Activated CD4-positive, alpha-beta memory T cell treated with anti-CD3 and anti-CD28 coated beads for 36 hours (primary cell): ENCODE measurements at regions of chr1 and their contacts with region 1.

Region 1: GRCh38 chr1:66374561-66375111 is 159.3 kb upstream of the SGIP1 start:
- DNase-seq: peak; percentile 71
- H3K4me3 Mint-ChIP-seq: peak overlapping the region; percentile 64
- H3K27ac Mint-ChIP-seq: peak overlapping the region; percentile 99
- H3K4me1 Mint-ChIP-seq: peaks cover 76% of the 10 kb centered on the region
- H3K27me3 Mint-ChIP-seq: no peaks in the 10 kb centered on the region

Region 2: GRCh38 chr1:65812065-65812464 is 562.6 kb before region 1 on chr1:
- CTCF ChIA-PET with region 1: no interaction called
- POLR2A ChIA-PET with region 1: no interaction called
- intact Hi-C with region 1: loop called (anchors 1 kb)
- DNase-seq: peak; percentile 79
- H3K4me3 Mint-ChIP-seq: no peak overlapping the region
- H3K27ac Mint-ChIP-seq: peak overlapping the region; percentile 11
- H3K4me1 Mint-ChIP-seq: peaks cover 18% of the 10 kb centered on the region
- H3K27me3 Mint-ChIP-seq: peaks cover 17% of the 10 kb centered on the region

Region 3: DNA sequence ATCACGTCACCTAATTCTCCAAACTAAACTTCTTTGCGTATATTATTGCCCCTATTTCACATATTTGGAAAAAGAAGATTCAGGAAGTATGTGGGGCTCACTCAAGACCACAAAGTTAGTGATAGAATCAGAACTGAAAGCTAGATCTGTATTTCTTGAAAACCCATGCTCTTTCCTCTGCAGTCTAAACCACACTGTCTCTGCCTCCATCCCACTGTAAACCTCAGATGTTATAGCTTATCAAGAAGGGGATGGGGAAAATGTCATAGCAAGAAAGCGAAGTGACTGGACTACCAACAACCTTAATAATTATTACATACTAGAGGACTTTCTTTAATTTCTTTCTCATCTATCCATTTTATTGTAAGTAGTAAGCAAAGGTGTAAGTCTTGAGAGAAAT is 98.4 kb before region 1 on chr1:
- CTCF ChIA-PET with region 1: interaction called, 5 read pairs
- POLR2A ChIA-PET with region 1: interaction called, 11 read pairs
- intact Hi-C with region 1: loop called (anchors 1 kb)
- DNase-seq: peak; percentile 44
- H3K4me3 Mint-ChIP-seq: peak overlapping the region; percentile 49
- H3K27ac Mint-ChIP-seq: peak overlapping the region; percentile 65
- H3K4me1 Mint-ChIP-seq: peaks cover 87% of the 10 kb centered on the region
- H3K27me3 Mint-ChIP-seq: no peaks in the 10 kb centered on the region

Region 4: DNA sequence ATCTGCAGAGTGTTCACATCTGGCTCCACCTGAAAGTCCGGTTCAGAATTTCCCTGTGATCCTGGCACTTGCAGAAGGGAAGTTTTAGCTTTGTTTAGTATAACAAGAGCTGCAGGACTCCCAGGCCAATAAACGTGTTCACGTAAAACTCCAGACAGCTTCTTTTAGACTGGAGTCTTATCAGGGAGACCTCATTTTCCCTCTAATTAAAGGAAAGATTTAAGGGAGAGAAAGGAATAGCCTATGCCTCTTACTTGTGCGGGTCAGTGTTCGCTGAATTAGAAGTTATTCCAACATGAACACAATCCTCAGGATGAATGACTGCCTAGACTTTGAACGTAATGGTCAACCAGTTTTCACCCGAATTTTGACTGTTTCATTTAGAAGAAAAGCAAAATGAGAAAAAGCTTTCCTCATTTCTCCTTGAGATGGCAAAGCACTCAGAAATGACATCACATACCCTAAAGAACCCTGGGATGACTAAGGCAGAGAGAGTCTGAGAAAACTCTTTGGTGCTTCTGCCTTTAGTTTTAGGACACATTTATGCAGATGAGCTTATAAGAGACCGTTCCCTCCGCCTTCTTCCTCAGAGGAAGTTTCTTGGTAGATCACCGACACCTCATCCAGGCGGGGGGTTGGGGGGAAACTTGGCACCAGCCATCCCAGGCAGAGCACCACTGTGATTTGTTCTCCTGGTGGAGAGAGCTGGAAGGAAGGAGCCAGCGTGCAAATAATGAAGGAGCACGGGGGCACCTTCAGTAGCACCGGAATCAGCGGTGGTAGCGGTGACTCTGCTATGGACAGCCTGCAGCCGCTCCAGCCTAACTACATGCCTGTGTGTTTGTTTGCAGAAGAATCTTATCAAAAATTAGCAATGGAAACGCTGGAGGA is 42.7 kb before region 1 on chr1:
- CTCF ChIA-PET with region 1: interaction called, 5 read pairs
- POLR2A ChIA-PET with region 1: interaction called, 21 read pairs
- intact Hi-C with region 1: loop called (anchors 1 kb)
- DNase-seq: peak; percentile 75
- H3K4me3 Mint-ChIP-seq: peak overlapping the region; percentile 93
- H3K27ac Mint-ChIP-seq: peak overlapping the region; percentile 96
- H3K4me1 Mint-ChIP-seq: peaks cover 48% of the 10 kb centered on the region
- H3K27me3 Mint-ChIP-seq: no peaks in the 10 kb centered on the region

Region 5: DNA sequence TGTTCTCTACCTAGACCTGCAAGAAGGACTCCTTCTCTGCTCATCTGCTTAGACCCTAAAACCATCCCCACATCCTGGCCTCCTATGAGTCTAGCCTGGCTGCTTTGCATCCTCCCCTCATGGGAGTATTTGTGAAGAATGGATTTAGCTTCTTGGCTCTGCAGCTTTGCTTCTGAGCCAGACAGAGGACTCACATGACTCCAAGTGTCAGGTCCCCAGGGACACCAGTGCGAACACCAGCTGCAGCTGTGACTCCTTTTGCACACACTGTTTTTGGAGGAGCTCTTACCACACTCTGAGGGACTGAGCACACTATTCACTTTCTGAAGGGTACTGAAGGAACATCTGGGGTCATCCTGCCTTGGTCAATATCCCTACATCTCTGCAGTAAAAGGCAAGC is 27.6 kb after region 1 on chr1:
- CTCF ChIA-PET with region 1: interaction called, 3 read pairs
- POLR2A ChIA-PET with region 1: no interaction called
- intact Hi-C with region 1: loop called (anchors 1 kb)
- DNase-seq: no peak
- H3K4me3 Mint-ChIP-seq: no peak overlapping the region
- H3K27ac Mint-ChIP-seq: no peak overlapping the region
- H3K4me1 Mint-ChIP-seq: peaks cover 31% of the 10 kb centered on the region
- H3K27me3 Mint-ChIP-seq: no peaks in the 10 kb centered on the region

Region 6: GRCh38 chr1:66426239-66426853 is 51.7 kb after region 1 on chr1:
- CTCF ChIA-PET with region 1: no interaction called
- POLR2A ChIA-PET with region 1: no interaction called
- intact Hi-C with region 1: no loop called
- DNase-seq: no peak
- H3K4me3 Mint-ChIP-seq: no peak overlapping the region
- H3K27ac Mint-ChIP-seq: no peak overlapping the region
- H3K4me1 Mint-ChIP-seq: peaks cover 7% of the 10 kb centered on the region
- H3K27me3 Mint-ChIP-seq: no peaks in the 10 kb centered on the region

Region 7: GRCh38 chr1:66824771-66825170 is 450.1 kb after region 1 on chr1:
- CTCF ChIA-PET with region 1: no interaction called
- POLR2A ChIA-PET with region 1: no interaction called
- intact Hi-C with region 1: no loop called
- DNase-seq: no peak
- H3K4me3 Mint-ChIP-seq: no peak overlapping the region
- H3K27ac Mint-ChIP-seq: no peak overlapping the region
- H3K4me1 Mint-ChIP-seq: no peaks in the 10 kb centered on the region
- H3K27me3 Mint-ChIP-seq: no peaks in the 10 kb centered on the region

Region 8: DNA sequence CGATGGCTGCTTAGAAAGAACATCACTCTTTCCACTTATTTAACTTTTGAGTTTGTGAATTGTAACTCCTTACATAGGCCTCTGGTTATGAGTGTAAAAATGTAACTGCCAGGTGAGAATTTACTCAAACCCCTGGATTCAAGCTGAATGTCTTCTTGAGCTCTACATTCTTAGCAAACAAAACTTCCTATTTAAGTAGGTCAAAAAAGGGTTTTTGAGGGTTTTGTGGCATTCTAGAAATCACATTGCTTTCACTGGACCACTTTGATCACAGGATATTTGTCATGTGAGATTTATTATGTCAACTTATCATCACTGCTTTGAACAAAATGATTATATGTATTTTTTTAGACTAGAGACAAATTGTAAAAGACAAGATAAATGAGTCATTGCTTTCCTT is 797.3 kb after region 1 on chr1:
- CTCF ChIA-PET with region 1: no interaction called
- POLR2A ChIA-PET with region 1: no interaction called
- intact Hi-C with region 1: loop called (anchors 10 kb)
- DNase-seq: no peak
- H3K4me3 Mint-ChIP-seq: peak overlapping the region; percentile 74
- H3K27ac Mint-ChIP-seq: peak overlapping the region; percentile 99
- H3K4me1 Mint-ChIP-seq: peaks cover 72% of the 10 kb centered on the region
- H3K27me3 Mint-ChIP-seq: peaks cover 5% of the 10 kb centered on the region